Posterior vena cava (tissue), 2 donors: ENCODE measurements at regions of chr16 and their contacts with region 1.

Region 1: GRCh38 chr16:85829751-85830445 is 30.4 kb downstream of the COX4I1 start:
- DNase-seq: peak; percentile 85

Region 2: DNA sequence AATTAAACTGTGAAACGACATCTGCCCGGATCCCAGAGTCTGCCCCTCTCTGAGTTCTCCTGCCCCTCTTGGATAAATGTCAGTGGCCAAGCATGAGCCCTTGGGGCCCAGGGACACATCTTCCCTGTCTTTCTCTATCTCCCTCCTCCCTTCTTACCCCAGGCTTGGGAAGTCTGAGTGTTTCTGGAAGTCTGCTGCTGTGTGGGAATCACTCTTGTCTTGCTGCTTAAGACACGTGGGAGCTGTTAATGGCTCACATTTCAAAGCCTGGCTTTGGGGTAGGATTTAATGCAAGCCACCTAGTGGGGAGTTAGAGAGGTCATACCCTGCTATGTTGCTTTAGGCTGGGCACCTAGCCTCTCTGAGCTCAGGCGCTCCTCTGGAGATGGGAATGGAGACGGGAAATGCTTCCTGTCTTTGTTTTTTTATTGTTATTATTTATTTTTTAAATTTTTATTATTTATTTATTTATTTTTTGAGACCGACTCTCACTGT is 499.2 kb before region 1 on chr16:
- intact Hi-C with region 1: no loop called
- DNase-seq: no peak

Region 3: DNA sequence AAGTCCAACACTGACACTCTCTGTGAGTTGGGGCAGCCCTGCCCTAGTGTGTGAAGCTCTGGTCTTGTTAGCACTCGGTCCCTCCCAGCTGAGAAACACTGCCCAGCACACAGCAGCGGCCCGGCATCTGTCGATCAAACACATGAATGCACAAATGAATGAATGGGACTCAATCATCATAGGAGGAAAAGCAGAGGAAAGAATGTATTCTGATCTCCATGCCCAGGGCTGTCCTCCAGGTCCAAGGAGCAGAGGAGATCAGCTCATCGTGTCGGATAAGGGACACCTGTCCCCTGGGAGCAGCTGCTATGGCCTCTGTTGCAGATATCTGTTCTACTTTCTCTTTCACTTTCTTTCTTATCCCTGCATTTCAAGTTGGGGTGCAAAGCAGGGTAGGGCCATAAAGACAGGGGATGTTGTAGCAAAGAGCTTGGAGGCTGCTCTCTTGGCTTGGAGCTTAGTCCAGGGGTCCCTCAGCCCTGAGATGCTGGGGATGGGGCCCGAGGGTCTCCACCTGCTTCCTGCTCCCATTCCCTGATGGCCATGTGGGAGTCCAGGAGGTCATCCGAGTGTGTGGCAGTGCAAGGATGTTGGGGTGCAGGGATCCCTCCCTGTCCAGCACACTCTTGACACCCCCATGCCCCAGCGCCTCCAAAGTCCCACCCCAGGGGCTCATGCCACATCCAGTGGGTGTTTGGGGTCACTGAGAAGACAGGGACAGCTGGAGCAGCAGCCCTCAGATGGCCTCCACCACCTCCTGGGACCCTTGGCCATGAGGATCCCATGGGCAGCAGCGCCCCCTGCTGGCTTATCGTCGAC is 157.2 kb after region 1 on chr16:
- intact Hi-C with region 1: loop called (anchors 1 to 10 kb)
- DNase-seq: peak; percentile 73